Activated naive CD4-positive, alpha-beta T cell treated with anti-CD3 and anti-CD28 coated beads for 36 hours (primary cell): ENCODE measurements at regions of chr5 and their contacts with region 1.

Region 1: GRCh38 chr5:90940227-90940995 is 381.8 kb downstream of the ADGRV1 start:
- DNase-seq: peak; percentile 88
- H3K4me3 Mint-ChIP-seq: no peak overlapping the region
- H3K27ac Mint-ChIP-seq: peak overlapping the region; percentile 73
- H3K4me1 Mint-ChIP-seq: peaks cover 13% of the 10 kb centered on the region
- H3K27me3 Mint-ChIP-seq: no peaks in the 10 kb centered on the region

Region 2: GRCh38 chr5:90873033-90873517 is 67.3 kb before region 1 on chr5:
- CTCF ChIA-PET with region 1: no interaction called
- intact Hi-C with region 1: loop called (anchors 1 kb)
- DNase-seq: peak; percentile 54
- H3K4me3 Mint-ChIP-seq: no peak overlapping the region
- H3K27ac Mint-ChIP-seq: no peak overlapping the region
- H3K4me1 Mint-ChIP-seq: peaks cover 22% of the 10 kb centered on the region
- H3K27me3 Mint-ChIP-seq: peaks cover 23% of the 10 kb centered on the region

Region 3: DNA sequence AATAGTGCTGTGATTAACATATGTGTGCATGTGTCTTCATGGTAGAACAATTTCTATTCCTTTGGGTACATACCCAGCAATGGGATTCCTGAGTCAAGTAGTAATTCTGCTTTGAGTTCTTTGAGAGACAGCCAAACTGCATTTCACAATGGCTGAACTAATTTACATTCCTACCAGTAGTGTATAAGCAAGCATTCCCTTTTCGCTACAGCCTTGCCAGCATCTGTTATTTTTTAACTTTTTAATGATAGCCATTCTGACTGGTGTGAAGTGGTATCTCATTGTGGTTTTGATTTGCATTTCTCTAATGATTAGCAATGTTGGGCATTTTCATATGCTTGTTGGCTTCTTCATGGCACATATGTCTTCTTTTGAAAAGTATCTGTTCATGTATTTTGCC is 134.2 kb after region 1 on chr5:
- CTCF ChIA-PET with region 1: no interaction called
- intact Hi-C with region 1: loop called (anchors 5 kb)
- DNase-seq: no peak
- H3K4me3 Mint-ChIP-seq: no peak overlapping the region
- H3K27ac Mint-ChIP-seq: no peak overlapping the region
- H3K4me1 Mint-ChIP-seq: peaks cover 18% of the 10 kb centered on the region
- H3K27me3 Mint-ChIP-seq: peaks cover 20% of the 10 kb centered on the region

Region 4: DNA sequence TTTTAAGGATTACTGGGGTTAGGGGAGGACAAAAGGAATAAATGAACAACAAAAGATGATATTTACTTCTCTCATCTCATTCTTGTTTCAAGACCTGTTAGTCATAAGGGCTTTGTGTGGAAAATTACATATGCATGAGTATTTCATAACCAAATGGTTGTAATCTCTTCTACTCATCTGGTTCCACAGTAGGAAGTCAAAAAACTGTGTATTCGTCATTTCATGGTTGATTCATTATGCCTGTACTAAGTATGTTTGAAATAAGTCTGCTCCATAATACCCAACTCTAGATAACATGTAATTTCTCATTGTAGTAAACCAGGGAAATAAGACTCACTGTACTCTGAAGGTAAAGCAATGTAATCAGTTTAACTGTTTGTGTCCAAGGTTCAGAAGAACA is 229.9 kb after region 1 on chr5:
- CTCF ChIA-PET with region 1: no interaction called
- intact Hi-C with region 1: loop called (anchors 2 kb)
- DNase-seq: no peak
- H3K4me3 Mint-ChIP-seq: no peak overlapping the region
- H3K27ac Mint-ChIP-seq: peak overlapping the region; percentile 16
- H3K4me1 Mint-ChIP-seq: peaks cover 18% of the 10 kb centered on the region
- H3K27me3 Mint-ChIP-seq: peaks cover 3% of the 10 kb centered on the region